ENCODE measurements at regions of chr14 and their contacts with region 1.

Region 1: DNA sequence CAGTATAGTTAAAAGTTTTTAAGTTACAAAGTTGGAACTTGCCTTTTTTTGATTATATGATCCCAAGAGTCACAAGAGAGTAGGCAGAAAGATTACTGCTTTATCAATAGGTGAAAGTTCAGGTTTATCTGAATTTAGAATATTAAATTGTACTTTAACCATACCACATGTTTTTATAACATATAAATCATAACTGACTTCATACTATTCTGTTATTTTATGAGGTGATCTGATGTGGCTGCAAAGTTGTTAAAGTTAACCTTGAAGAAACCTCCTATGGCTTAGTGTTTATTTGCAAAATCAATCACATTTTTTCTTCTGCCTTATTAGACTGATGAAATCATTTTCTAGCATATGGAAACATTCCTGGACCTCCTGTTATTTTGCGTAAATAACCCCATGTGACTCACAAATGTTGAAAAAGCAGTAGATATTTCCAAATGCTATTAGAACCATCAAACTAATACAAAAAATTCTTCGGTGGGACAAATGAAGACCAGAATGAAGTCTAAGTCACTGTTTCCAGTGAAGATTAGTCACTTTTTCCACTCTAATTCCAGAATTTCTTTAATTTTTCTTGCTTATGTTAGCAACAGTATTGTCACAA is 132.1 kb downstream of the RAD51B start:
- DNase-seq: no peak
- H3K4me3 ChIP-seq: no peak overlapping the region
- H3K27ac ChIP-seq: no peak overlapping the region
- H3K4me1 ChIP-seq: no peaks in the 10 kb centered on the region
- H3K27me3 ChIP-seq: no peaks in the 10 kb centered on the region
- CTCF ChIP-seq: no peak
- POLR2A ChIP-seq: no peak

Region 2: DNA sequence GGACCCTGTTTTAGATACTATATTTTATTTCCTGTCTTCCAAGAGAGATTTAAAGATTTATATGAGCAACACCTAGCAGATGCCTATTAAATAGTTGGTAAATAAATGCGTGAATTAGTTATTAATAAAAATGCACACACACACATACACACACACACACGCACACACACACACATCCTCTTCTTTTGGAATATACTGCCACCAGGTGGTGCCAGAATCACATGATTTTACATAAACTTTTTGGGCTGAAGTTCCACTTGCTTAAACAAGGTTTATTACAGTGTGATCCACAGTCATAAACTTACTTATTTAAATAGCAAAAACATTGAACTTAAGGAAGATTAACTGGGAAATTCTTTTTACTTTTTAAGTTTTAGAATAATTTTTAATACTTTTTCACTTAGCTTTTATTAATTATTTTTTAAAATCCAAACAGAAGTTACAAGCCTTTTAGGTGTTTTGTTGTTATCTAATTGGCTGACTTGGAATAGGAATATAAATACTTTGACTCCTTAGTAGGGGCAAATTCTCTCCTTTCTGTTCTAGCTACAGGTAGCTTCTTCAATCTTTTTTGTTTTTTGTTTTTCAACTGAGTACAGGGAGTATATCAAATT is 114.5 kb before region 1 on chr14:
- intact Hi-C with region 1: no loop called
- DNase-seq: peak; percentile 30 to 72
- H3K4me3 ChIP-seq: no peak overlapping the region
- H3K27ac ChIP-seq: no peak overlapping the region
- H3K4me1 ChIP-seq: no peaks in the 10 kb centered on the region
- H3K27me3 ChIP-seq: no peaks in the 10 kb centered on the region
- CTCF ChIP-seq: peak in 5 of 6 experiments; percentile 24 to 92 (median 67)
- POLR2A ChIP-seq: no peak

Region 3: DNA sequence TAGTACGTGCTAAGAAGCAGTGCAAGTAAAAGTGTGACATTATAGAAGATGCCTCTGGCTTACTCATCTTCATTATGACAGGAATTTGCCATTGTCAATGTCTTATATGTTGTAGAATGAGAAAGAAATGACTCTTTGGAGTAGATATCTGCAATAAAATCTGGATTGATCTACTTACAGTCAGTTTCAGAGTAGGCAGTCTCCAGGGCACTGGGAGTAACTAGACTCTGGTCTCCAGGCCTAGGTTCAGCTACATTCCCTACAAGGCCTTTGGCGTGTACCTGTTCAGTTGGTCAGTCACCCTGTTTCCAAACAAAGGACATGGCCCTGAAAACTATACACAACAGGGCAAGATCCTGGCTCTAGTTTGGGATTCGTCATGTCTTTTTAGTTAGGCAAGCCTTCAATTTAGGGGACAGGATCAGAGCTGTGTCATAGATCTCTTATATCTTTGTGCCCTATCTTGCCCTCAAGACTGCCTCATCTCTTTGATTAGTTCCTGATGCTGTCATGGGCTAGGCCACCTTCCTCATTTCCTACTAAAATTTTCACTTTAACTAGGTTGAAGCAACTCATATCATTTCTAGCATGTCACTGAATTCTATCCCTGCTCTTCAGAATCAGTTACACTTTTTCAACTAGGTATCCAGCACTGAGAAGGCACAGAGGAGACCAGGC is 277.9 kb after region 1 on chr14:
- intact Hi-C with region 1: loop called (anchors 10 kb)
- DNase-seq: no peak
- H3K4me3 ChIP-seq: no peak overlapping the region
- H3K27ac ChIP-seq: no peak overlapping the region
- H3K4me1 ChIP-seq: peaks cover 21 to 23% of the 10 kb centered on the region in 2 donors
- H3K27me3 ChIP-seq: no peaks in the 10 kb centered on the region
- CTCF ChIP-seq: no peak
- POLR2A ChIP-seq: no peak

Measured in thyroid gland (tissue), 4 donors.